Heart left ventricle (tissue), 16 donors: ENCODE measurements at regions of chr7 and their contacts with region 1.

Region 1: GRCh38 chr7:22822486-22823141 is at the start of gene TOMM7:
- DNase-seq: peak; percentile 91 to 94 (median 93)
- ATAC-seq: peak; percentile 96 to 98 (median 96)
- H3K4me3 ChIP-seq: peak within 1 kb of the TSS; percentile 56 to 97 (median 80)
- H3K27ac ChIP-seq: peak within 1 kb of the TSS in 11 of 12 donors; percentile 66 to 91 (median 85)
- H3K4me1 ChIP-seq: peaks cover 0 to 37% (median 20%) of the 10 kb centered on the region in 12 donors
- H3K27me3 ChIP-seq: no peaks in the 10 kb centered on the region
- CTCF ChIP-seq: peak; percentile 8 to 70 (median 54)
- POLR2A ChIP-seq: peak in 1 of 2 donors; percentile 70
- total RNA-seq, gene TOMM7: 137 to 529 (median 399) TPM

Region 2: DNA sequence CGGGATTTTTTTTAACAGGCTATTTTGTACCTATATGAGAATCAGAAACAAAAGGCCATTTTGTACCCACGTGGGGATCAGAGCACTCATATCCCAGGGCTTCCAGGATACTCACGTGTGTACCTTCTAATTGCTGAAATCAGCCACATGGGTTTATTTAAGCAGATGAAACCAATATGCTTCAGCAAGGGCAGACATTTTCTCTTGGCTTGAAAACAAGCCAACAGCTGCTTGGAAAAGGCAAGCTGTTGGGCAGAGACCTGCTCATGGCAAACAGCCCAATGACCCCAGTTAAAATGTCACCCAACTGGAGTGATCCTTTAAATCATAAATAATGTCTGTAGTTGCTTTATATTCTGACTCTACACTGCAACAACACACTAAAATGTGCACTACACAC is 26.5 kb after region 1 on chr7:
- intact Hi-C with region 1: loop called in 2 of 10 experiments (anchors 2 kb)
- DNase-seq: no peak
- ATAC-seq: no peak
- H3K4me3 ChIP-seq: no peak overlapping the region
- H3K27ac ChIP-seq: no peak overlapping the region
- H3K4me1 ChIP-seq: peaks cover 0 to 9% (median 3%) of the 10 kb centered on the region in 12 donors
- H3K27me3 ChIP-seq: no peaks in the 10 kb centered on the region
- CTCF ChIP-seq: no peak
- POLR2A ChIP-seq: no peak